Activated B cell treated with CpG ODN at 0.5 μM for 24 hours (primary cell): ENCODE measurements at regions of chr22 and their contacts with region 1.

Region 1: GRCh38 chr22:22030493-22031182 is 48.1 kb upstream of the TOP3B start:
- DNase-seq: peak; percentile 62
- ATAC-seq: peak; percentile 79
- H3K4me3 Mint-ChIP-seq: peak overlapping the region; percentile 84
- H3K27ac Mint-ChIP-seq: peak overlapping the region; percentile 97
- H3K4me1 Mint-ChIP-seq: peaks cover 84% of the 10 kb centered on the region
- H3K27me3 Mint-ChIP-seq: no peaks in the 10 kb centered on the region
- CTCF ChIP-seq: no peak

Region 2: GRCh38 chr22:21982338-21982965 is 48.2 kb before region 1 on chr22 and contains the start of gene TOP3B:
- CTCF ChIA-PET with region 1: interaction called, 3 read pairs
- POLR2A ChIA-PET with region 1: interaction called, 5 read pairs
- intact Hi-C with region 1: loop called (anchors 5 kb)
- DNase-seq: peak; percentile 79
- ATAC-seq: peak; percentile 94
- H3K4me3 Mint-ChIP-seq: peak within 1 kb of the TSS; percentile 88
- H3K27ac Mint-ChIP-seq: peak within 1 kb of the TSS; percentile 87
- H3K4me1 Mint-ChIP-seq: peaks cover 37% of the 10 kb centered on the region
- H3K27me3 Mint-ChIP-seq: no peaks in the 10 kb centered on the region
- CTCF ChIP-seq: no peak
- total RNA-seq, gene TOP3B: 60.4 and 83.4 TPM in 2 replicates

Region 3: GRCh38 chr22:22099833-22100812 is 69.5 kb after region 1 on chr22:
- CTCF ChIA-PET with region 1: interaction called, 13 read pairs
- POLR2A ChIA-PET with region 1: interaction called, 9 read pairs
- intact Hi-C with region 1: loop called (anchors 2 kb)
- DNase-seq: no peak
- ATAC-seq: peak; percentile 19
- H3K4me3 Mint-ChIP-seq: no peak overlapping the region
- H3K27ac Mint-ChIP-seq: peak overlapping the region; percentile 92
- H3K4me1 Mint-ChIP-seq: peaks cover 52% of the 10 kb centered on the region
- H3K27me3 Mint-ChIP-seq: no peaks in the 10 kb centered on the region
- CTCF ChIP-seq: no peak

Region 4: GRCh38 chr22:22168190-22168940 is 137.7 kb after region 1 on chr22:
- CTCF ChIA-PET with region 1: interaction called, 5 read pairs
- POLR2A ChIA-PET with region 1: interaction called, 13 read pairs
- intact Hi-C with region 1: no loop called
- DNase-seq: peak; percentile 31
- ATAC-seq: peak; percentile 54
- H3K4me3 Mint-ChIP-seq: peak overlapping the region; percentile 84
- H3K27ac Mint-ChIP-seq: peak overlapping the region; percentile 97
- H3K4me1 Mint-ChIP-seq: peaks cover 86% of the 10 kb centered on the region
- H3K27me3 Mint-ChIP-seq: no peaks in the 10 kb centered on the region
- CTCF ChIP-seq: no peak

Region 5: DNA sequence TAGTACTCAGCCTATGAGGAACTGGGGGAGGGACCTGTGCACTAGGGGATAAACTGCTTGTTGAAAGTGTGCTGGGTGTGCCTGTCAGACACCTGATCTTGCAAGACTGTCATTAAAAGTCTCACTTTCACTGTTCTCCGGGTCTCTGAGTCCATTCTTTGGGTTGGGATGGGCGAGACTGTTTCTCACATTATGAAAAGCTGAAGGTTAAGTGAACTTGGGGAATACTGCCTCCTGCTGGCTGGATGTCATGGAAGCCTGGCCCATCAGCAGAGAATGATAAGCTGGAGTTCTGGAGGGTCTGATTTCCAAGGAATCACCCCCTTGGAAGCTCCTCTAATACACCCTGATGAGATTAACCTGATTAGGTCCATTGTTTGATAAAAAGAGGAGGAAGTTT is 204.9 kb after region 1 on chr22:
- CTCF ChIA-PET with region 1: interaction called, 14 read pairs
- POLR2A ChIA-PET with region 1: no interaction called
- intact Hi-C with region 1: loop called (anchors 1 kb)
- DNase-seq: no peak
- ATAC-seq: no peak
- H3K4me3 Mint-ChIP-seq: peak overlapping the region; percentile 38
- H3K27ac Mint-ChIP-seq: no peak overlapping the region
- H3K4me1 Mint-ChIP-seq: peaks cover 25% of the 10 kb centered on the region
- H3K27me3 Mint-ChIP-seq: peaks cover 2% of the 10 kb centered on the region
- CTCF ChIP-seq: no peak

Region 6: GRCh38 chr22:22935546-22936157 is 905.0 kb after region 1 on chr22:
- CTCF ChIA-PET with region 1: interaction called, 3 read pairs
- POLR2A ChIA-PET with region 1: interaction called, 10 read pairs
- intact Hi-C with region 1: no loop called
- DNase-seq: peak; percentile 77
- ATAC-seq: peak; percentile 87
- H3K4me3 Mint-ChIP-seq: peak overlapping the region; percentile 59
- H3K27ac Mint-ChIP-seq: peak overlapping the region; percentile 96
- H3K4me1 Mint-ChIP-seq: peaks cover 98% of the 10 kb centered on the region
- H3K27me3 Mint-ChIP-seq: no peaks in the 10 kb centered on the region
- CTCF ChIP-seq: no peak